Posterior vena cava (tissue), 2 donors: ENCODE measurements at regions of chr15 and their contacts with region 1.

Region 1: GRCh38 chr15:29115093-29115991 is 154.3 kb downstream of the NSMCE3 start:
- DNase-seq: no peak

Region 2: DNA sequence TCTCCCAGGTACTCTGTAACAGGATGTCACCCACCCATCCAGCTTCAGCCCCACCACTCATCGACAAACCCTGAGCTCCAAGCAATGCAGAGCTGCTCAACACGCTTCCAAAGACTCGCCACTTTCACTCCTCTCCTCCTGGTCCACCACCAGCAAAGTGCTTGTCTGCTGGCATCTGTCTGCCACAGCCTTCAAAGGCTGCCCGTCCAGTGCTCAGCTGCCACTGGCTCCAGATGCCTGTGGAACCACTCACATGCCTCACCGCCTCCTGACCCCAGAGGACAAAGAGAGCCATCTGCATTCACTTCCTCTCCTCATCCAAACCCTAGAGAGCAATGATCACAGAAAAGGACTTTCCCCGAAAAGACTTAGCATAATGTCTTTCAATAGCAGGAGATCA is 906.8 kb before region 1 on chr15:
- intact Hi-C with region 1: loop called in 1 of 2 experiments (anchors 5 kb)
- DNase-seq: no peak

Region 3: GRCh38 chr15:29018120-29018805 is 97.1 kb before region 1 on chr15:
- intact Hi-C with region 1: no loop called
- DNase-seq: peak; percentile 62

Region 4: GRCh38 chr15:29131840-29132420 is 16.6 kb after region 1 on chr15:
- intact Hi-C with region 1: no loop called
- DNase-seq: peak; percentile 74

Region 5: DNA sequence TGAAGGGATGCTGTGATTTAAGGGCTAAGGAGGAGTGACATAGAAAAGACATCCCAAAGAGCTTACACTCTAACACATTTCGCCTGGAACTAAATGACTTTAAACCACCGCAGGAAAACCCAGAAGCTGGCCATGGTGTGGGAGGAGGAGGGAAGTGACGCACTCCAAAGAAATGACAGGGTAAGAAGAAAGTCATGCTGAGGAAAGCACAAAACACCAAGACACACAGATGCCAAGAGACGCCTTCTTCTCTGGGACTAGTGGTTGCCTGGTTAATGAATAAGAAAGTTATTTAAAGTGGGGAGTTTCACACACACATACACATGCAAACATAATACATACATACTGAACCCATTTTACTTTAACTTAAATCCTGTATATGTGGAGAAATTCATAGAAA is 28.6 kb after region 1 on chr15:
- intact Hi-C with region 1: no loop called
- DNase-seq: no peak

Region 6: DNA sequence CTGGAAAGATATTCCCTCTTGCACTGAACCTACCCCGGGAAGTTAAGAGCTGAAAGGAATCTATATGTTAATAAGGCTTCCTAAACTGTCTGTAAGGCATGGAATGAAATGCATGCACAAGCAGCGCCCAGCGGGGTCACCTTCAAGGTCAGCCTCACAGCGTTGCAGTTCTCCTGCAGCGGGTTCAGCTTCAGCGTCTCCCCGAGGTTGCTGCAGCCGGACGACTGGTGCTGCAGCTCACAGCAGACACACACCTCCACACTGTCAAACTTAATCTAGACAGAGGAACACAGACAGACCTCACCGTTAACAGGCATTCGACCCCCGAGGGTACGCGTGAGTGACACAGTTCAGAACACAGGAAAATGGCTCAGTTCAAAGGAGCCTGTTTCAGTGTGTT is 80.9 kb after region 1 on chr15:
- intact Hi-C with region 1: no loop called
- DNase-seq: no peak